ENCODE measurements at regions of chr3 and their contacts with region 1.

Region 1: DNA sequence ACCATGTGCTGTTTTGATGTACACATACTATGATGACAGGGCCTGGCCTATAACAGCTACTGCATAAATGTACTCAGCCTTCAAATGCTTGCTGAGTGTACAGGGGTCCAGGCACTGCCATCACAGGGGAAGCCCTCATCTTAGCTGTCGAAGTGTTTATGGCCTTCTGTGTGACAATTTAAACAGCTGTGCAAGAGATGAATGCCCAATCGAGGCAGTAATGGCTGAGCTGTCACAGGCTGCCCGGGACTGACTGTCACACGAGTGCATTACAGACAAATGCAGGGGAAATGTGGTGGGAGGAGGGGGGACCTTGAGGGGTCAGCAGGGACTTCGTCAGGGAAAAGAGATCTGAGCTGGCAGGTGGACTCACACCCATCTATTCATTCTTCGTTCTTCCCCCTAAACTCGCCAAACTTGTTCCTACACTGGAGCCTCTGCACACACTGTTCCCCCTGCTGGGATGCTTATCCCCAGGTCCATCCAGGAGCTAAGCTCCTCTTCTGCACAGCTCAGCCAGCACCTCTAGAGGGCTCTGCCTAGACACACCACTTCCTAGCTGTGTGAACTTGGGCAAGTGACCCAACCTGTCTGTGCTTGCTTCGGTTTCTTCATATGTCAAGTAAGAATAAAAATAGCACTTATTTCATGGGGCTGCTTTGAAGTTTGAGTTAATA is 156.2 kb upstream of the IQSEC1 start:
- DNase-seq: peak in 1 of 5 donors; percentile 21
- ATAC-seq: no peak
- H3K4me3 ChIP-seq: no peak overlapping the region
- H3K27ac ChIP-seq: no peak overlapping the region
- H3K4me1 ChIP-seq: peaks cover 0 to 16% (median 4%) of the 10 kb centered on the region in 12 donors
- H3K27me3 ChIP-seq: peaks cover 0 to 7% (median 0%) of the 10 kb centered on the region in 9 donors
- CTCF ChIP-seq: peak in 3 of 12 donors; percentile 5 to 18 (median 11)
- POLR2A ChIP-seq: no peak

Region 2: DNA sequence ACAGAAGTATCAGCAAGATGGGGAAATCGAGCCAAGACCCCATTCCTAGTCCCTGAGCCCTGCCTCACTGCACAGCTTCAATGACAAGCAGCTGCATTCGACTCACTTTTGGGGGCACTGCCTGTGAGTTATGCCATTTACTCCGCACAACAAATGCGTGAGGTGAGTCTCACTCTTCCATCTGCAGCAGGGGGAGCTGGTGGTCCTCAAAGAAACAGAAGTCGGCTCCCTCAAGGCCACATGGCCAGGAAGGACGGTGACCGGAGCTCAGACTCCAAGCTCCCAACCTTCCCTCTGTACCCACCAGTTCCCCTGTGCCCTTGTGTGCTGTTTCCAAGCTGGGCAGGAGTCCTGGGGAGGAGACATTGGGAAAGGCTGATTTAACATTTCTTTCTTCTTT is 28.5 kb before region 1 on chr3:
- intact Hi-C with region 1: loop called in 1 of 10 experiments (anchors 2 kb)
- DNase-seq: peak in 1 of 5 donors; percentile 16
- ATAC-seq: no peak
- H3K4me3 ChIP-seq: no peak overlapping the region
- H3K27ac ChIP-seq: no peak overlapping the region
- H3K4me1 ChIP-seq: peaks cover 0 to 11% (median 5%) of the 10 kb centered on the region in 12 donors
- H3K27me3 ChIP-seq: peaks cover 0 to 26% (median 14%) of the 10 kb centered on the region in 9 donors
- CTCF ChIP-seq: peak in 1 of 12 donors; percentile 8
- POLR2A ChIP-seq: no peak

Region 3: GRCh38 chr3:13262493-13263211 is 33.2 kb after region 1 on chr3:
- intact Hi-C with region 1: loop called in 2 of 10 experiments (anchors 5 kb)
- DNase-seq: peak in 3 of 5 donors; percentile 41 to 70 (median 45)
- ATAC-seq: peak; percentile 28 to 74 (median 74)
- H3K4me3 ChIP-seq: no peak overlapping the region
- H3K27ac ChIP-seq: peak overlapping the region in 8 of 12 donors; percentile 24 to 82 (median 56)
- H3K4me1 ChIP-seq: peaks cover 0 to 50% (median 10%) of the 10 kb centered on the region in 12 donors
- H3K27me3 ChIP-seq: no peaks in the 10 kb centered on the region
- CTCF ChIP-seq: no peak
- POLR2A ChIP-seq: no peak

Region 4: DNA sequence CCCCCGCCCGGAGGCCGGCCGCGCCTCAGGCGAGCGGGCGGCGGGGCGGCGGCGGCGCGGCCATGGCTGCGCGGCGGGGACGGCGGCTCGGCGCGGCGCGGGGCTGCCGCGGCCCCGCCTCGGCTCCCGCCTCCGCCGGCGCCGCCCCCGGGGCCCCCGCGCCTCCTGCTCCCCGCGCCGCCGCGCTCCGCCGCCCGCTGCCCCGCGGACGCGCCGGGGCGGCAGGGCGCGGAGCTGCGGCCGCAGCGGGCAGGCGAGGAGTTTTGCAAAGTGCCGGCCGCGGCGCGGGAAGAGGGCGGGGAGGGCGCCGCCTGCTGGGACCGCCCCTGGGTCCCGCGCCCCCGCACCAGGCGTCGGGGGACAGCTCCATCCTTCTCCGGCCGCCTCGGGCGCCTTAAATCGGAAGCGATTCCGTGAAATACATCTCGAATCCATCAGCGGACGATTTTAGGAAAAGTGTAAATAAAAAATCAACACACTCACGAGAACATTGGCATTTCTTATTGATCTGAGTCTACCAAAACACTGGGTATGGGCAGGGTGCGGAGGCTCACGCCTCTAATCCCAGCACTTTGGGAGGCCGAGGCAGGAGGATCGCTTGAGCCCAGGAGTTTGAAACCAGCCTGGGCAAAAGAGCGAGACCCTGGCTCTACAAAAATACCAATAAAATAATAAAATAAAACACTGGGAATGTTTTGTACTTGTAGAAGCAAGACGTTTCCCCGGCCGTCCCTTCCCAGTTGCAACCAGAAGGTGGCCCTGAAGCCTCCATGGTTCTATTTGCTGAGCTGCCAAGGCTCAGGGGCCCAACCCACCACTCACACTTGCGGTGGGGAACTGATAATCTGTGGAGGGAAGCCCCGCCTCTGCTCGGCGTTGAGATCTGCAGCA is 53.8 kb after region 1 on chr3:
- intact Hi-C with region 1: loop called in 1 of 10 experiments (anchors 10 kb)
- DNase-seq: peak in 1 of 5 donors; percentile 41
- ATAC-seq: peak in 2 of 4 donors; percentile 27 to 50
- H3K4me3 ChIP-seq: peak overlapping the region in 11 of 12 donors; percentile 50 to 80 (median 66)
- H3K27ac ChIP-seq: peak overlapping the region in 6 of 12 donors; percentile 25 to 90 (median 82)
- H3K4me1 ChIP-seq: peaks cover 0 to 23% (median 9%) of the 10 kb centered on the region in 12 donors
- H3K27me3 ChIP-seq: peaks cover 6 to 50% (median 31%) of the 10 kb centered on the region in 9 donors
- CTCF ChIP-seq: peak in 11 of 12 donors; percentile 15 to 55 (median 35)
- POLR2A ChIP-seq: no peak

Region 5: GRCh38 chr3:14001136-14001535 is 771.7 kb after region 1 on chr3:
- intact Hi-C with region 1: no loop called
- DNase-seq: no peak
- ATAC-seq: no peak
- H3K4me3 ChIP-seq: no peak overlapping the region
- H3K27ac ChIP-seq: no peak overlapping the region
- H3K4me1 ChIP-seq: no peaks in the 10 kb centered on the region
- H3K27me3 ChIP-seq: no peaks in the 10 kb centered on the region
- CTCF ChIP-seq: no peak
- POLR2A ChIP-seq: no peak

Measured in heart left ventricle (tissue), 16 donors.